CD8-positive, alpha-beta T cell (primary cell): ENCODE measurements at regions of chr19 and their contacts with region 1.

Region 1: DNA sequence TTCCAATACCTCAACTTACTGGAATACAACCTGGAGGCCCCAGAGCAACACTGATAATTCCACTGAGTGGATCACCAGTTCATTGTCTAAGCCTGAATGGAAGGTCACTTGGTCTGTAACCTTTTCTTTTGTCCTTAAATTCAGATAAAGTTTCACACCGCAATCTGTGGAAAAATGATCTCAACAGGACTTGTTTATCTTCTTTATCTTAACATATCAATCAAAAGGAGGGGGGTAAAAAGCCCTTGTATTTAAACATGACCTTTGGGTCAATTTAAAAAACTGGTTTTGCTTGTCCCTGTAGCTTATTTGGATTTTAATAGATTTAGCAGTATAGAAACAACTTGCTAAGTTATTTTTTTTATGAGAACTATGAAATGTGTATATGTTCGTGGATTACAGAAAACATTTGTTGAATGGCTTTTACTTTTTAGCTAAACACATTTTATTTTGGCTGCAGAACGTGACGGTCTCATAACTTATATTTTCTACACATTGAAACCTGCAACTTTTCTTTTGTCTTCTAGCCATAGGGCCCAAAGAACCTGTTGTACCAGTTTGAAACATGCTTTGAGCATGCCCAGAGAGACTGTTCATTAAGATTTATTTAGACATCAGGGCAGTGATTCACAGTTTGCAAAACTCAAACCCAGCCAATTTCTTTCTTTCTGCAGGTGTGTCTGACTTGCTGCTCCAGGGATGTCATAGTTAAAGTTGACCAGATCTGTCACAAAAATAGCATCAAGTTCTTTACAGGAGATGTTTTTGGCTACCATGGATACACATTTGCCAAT is 21.8 kb downstream of the SAE1 start:
- DNase-seq: no peak
- ATAC-seq: no peak
- H3K4me3 ChIP-seq: no peak overlapping the region
- H3K4me3 Mint-ChIP-seq: no peak overlapping the region
- H3K27ac ChIP-seq: no peak overlapping the region
- H3K27ac Mint-ChIP-seq: no peak overlapping the region
- H3K4me1 ChIP-seq: peaks cover 44% of the 10 kb centered on the region
- H3K4me1 Mint-ChIP-seq: peaks cover 59% of the 10 kb centered on the region
- H3K27me3 ChIP-seq: no peaks in the 10 kb centered on the region
- H3K27me3 Mint-ChIP-seq: no peaks in the 10 kb centered on the region
- CTCF ChIP-seq: no peak

Region 2: DNA sequence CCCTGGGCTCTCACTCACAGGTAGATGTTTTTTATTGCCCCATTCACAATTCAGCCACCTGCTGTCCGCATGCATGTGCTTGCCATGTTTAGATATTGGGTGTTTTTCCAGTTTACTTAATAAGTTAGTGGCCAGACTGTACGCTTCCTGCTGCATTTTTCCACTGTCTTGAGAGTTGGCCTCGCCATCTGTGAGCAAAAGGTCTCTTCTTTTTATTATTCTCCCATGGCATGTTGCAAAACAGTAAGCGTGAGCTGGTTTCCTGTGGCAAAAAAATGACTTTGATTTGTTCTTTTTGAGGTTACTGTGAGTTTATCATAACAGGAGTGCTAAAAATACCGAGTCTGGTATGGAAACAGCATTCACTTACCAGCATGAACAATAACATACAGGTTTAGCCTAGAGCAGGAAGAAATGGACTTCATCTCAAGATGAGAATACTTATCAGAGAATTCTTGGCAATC is 24.2 kb after region 1 on chr19:
- CTCF ChIA-PET with region 1: interaction called, 17 read pairs
- POLR2A ChIA-PET with region 1: interaction called, 20 read pairs
- intact Hi-C with region 1: no loop called
- DNase-seq: peak in 8 of 9 experiments; percentile 12 to 77 (median 48)
- ATAC-seq: peak; percentile 85
- H3K4me3 ChIP-seq: peak overlapping the region in 1 of 2 experiments; percentile 2
- H3K4me3 Mint-ChIP-seq: peak overlapping the region; percentile 64
- H3K27ac ChIP-seq: peak overlapping the region; percentile 18 to 50
- H3K27ac Mint-ChIP-seq: peak overlapping the region; percentile 95
- H3K4me1 ChIP-seq: peaks cover 59% of the 10 kb centered on the region
- H3K4me1 Mint-ChIP-seq: peaks cover 69% of the 10 kb centered on the region
- H3K27me3 ChIP-seq: no peaks in the 10 kb centered on the region
- H3K27me3 Mint-ChIP-seq: no peaks in the 10 kb centered on the region
- CTCF ChIP-seq: no peak

Region 3: GRCh38 chr19:47190167-47190727 is 37.8 kb after region 1 on chr19:
- CTCF ChIA-PET with region 1: interaction called, 24 read pairs
- POLR2A ChIA-PET with region 1: interaction called, 36 read pairs
- intact Hi-C with region 1: loop called (anchors 2 kb)
- DNase-seq: peak in 8 of 9 experiments; percentile 18 to 80 (median 59)
- ATAC-seq: peak; percentile 39
- H3K4me3 ChIP-seq: no peak overlapping the region
- H3K4me3 Mint-ChIP-seq: peak overlapping the region; percentile 38
- H3K27ac ChIP-seq: peak overlapping the region in 1 of 2 experiments; percentile 9
- H3K27ac Mint-ChIP-seq: peak overlapping the region; percentile 94
- H3K4me1 ChIP-seq: peaks cover 70% of the 10 kb centered on the region
- H3K4me1 Mint-ChIP-seq: peaks cover 65% of the 10 kb centered on the region
- H3K27me3 ChIP-seq: no peaks in the 10 kb centered on the region
- H3K27me3 Mint-ChIP-seq: no peaks in the 10 kb centered on the region
- CTCF ChIP-seq: no peak

Region 4: DNA sequence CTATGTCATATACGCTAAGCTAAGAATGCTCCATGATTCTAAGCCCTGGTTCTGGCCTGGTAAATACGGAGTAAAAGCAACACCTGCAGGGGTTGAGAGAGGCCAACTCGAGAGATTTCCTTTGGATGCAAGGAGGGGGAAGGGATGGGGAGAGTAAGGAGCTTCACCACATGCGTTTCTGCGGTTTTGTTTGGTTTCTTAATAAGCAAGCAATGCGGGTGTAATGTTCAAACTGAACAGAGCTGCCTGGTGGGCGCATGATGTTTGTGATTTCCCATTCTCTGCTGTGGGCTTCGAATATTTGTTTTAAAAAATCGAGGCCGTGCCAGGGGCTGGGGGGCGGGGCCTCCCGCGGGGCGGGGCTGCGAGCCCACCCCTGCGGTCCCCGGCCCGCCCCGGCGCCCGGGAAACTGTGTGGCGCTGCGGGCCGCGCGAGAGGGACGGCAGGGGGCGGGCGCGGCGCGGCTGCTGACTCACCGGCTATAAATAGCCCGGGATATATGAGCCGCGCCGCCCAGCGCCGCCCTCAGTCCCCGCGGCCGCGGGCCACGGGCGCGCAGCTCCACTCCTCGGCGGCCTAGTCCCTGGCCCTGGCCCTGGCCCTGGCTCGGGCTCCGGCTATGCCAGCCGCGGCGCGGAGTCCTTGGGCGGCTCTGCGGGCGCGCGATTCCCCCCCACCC is 73.5 kb after region 1 on chr19:
- CTCF ChIA-PET with region 1: interaction called, 22 read pairs
- POLR2A ChIA-PET with region 1: interaction called, 14 read pairs
- intact Hi-C with region 1: no loop called
- DNase-seq: peak; percentile 80 to 95 (median 86)
- ATAC-seq: peak; percentile 47
- H3K4me3 ChIP-seq: peak overlapping the region; percentile 48 to 68
- H3K4me3 Mint-ChIP-seq: peak overlapping the region; percentile 81
- H3K27ac ChIP-seq: peak overlapping the region; percentile 73 to 89
- H3K27ac Mint-ChIP-seq: peak overlapping the region; percentile 92
- H3K4me1 ChIP-seq: peaks cover 40% of the 10 kb centered on the region
- H3K4me1 Mint-ChIP-seq: peaks cover 16% of the 10 kb centered on the region
- H3K27me3 ChIP-seq: no peaks in the 10 kb centered on the region
- H3K27me3 Mint-ChIP-seq: no peaks in the 10 kb centered on the region
- CTCF ChIP-seq: peak; percentile 51

Region 5: DNA sequence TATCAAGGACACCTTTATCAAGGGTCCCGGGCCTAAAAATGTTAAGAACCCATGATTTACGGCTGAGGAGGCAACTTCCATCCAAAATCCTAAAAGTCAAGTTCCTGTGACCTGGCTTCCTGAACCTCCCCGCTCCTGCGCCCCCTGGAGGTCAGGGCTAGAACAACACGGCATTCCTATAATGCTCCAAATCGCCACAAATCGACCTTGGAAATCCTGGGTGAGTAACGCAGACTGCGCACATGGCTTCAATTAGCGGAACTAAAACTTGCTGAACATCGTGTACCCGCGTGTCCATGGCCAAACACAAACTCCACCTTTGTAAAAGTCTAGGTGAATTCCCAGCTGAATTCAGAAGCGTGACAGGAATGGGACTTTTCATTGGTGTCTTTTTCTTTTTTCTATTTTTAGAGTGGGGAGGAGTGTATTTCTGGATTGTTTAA is 152.9 kb after region 1 on chr19:
- CTCF ChIA-PET with region 1: no interaction called
- POLR2A ChIA-PET with region 1: no interaction called
- intact Hi-C with region 1: loop called in 1 of 2 experiments (anchors 1 kb)
- DNase-seq: peak; percentile 13 to 73 (median 59)
- ATAC-seq: peak; percentile 54
- H3K4me3 ChIP-seq: no peak overlapping the region
- H3K4me3 Mint-ChIP-seq: no peak overlapping the region
- H3K27ac ChIP-seq: no peak overlapping the region
- H3K27ac Mint-ChIP-seq: no peak overlapping the region
- H3K4me1 ChIP-seq: no peaks in the 10 kb centered on the region
- H3K4me1 Mint-ChIP-seq: peaks cover 8% of the 10 kb centered on the region
- H3K27me3 ChIP-seq: no peaks in the 10 kb centered on the region
- H3K27me3 Mint-ChIP-seq: peaks cover 19% of the 10 kb centered on the region
- CTCF ChIP-seq: peak; percentile 89

Region 6: DNA sequence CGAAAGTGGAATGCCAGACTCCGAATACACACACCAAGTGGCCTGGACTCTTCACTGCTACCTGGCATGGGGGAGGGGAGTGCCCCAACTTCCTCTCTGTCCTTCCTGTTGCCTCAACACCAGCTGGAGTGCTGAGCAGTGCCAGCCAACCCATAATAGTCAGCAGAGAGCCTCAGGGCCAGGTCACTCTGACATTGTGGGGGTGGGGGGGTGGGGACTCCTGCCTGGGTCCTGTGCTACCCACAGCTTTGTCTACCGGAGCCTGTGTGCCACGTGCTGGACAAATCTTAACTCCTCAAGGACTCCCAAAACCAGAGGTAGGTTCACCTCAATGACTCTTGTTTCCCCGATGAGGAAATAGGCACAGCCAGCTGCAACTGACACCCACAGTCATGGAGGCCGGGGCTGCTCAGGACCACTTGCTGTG is 184.4 kb after region 1 on chr19:
- CTCF ChIA-PET with region 1: no interaction called
- POLR2A ChIA-PET with region 1: no interaction called
- intact Hi-C with region 1: no loop called
- DNase-seq: peak in 3 of 9 experiments; percentile 16 to 50 (median 23)
- ATAC-seq: no peak
- H3K4me3 ChIP-seq: no peak overlapping the region
- H3K4me3 Mint-ChIP-seq: no peak overlapping the region
- H3K27ac ChIP-seq: peak overlapping the region in 1 of 2 experiments; percentile 31
- H3K27ac Mint-ChIP-seq: no peak overlapping the region
- H3K4me1 ChIP-seq: peaks cover 5% of the 10 kb centered on the region
- H3K4me1 Mint-ChIP-seq: peaks cover 9% of the 10 kb centered on the region
- H3K27me3 ChIP-seq: no peaks in the 10 kb centered on the region
- H3K27me3 Mint-ChIP-seq: peaks cover 4% of the 10 kb centered on the region
- CTCF ChIP-seq: no peak